H1 (cell line): ENCODE measurements at regions of chr15 and their contacts with region 1.

Region 1: DNA sequence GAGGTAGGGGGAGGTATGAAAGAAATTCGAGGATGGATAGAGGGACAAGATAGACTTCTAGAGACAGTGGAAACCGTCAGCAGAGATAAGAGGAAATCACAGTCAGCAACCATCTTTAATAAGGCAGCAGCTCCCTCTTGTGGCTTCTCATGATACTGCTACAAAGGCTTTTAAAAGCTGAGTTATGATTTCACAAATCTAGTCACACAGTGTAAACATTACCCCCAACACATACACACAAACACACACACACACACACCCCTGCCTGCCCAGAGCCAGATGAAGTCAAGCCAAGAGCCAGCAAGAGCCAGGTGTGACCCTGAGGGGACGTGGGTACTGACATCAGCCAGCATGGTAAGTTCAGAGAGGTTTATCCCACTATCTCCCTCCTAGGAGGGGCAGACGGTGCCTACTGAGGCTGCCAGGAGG is 18.9 kb upstream of the TGM5 start:
- DNase-seq: peak in 1 of 2 experiments; percentile 70
- H3K4me3 ChIP-seq: no peak overlapping the region
- H3K27ac ChIP-seq: no peak overlapping the region
- H3K4me1 ChIP-seq: no peaks in the 10 kb centered on the region
- H3K27me3 ChIP-seq: no peaks in the 10 kb centered on the region
- CTCF ChIP-seq: peak in 2 of 3 experiments; percentile 80 to 83; a peak in 3 of 4 replicates
- EP300 ChIP-seq: no peak
- POLR2A ChIP-seq: no peak
- RAD21 ChIP-seq: peak; percentile 93 to 95

Region 2: DNA sequence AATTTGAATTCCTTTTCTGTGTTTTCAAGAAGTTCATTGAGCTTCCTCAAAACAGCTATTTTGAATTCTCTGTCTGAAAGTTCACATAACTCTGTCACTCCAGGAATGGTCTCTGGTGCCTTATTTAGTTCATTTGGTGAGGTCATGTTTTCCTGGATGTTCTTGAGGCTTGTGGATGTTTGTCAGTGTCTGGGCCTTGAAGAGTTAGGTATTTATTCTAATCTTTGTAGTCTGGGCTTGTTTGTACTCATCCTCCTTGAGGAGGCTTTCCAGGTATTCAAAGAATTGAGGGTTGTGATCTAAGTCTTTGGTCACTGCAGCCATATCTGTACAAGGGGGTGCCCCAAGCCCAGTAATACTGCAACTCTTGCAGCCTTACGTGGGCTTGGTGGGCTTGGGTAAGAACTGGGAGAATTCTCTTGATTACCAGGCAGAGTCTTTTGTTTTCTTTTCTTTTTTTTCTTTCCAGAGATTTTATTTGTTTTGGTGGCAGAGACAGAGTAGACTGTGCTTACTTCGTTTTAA is 119.8 kb before region 1 on chr15:
- CTCF ChIA-PET with region 1: no interaction called
- POLR2A ChIA-PET with region 1: no interaction called
- DNase-seq: no peak
- H3K4me3 ChIP-seq: no peak overlapping the region
- H3K27ac ChIP-seq: no peak overlapping the region
- H3K4me1 ChIP-seq: peaks cover 0 to 5% (median 0%) of the 10 kb centered on the region in 4 experiments; a peak in 1 of 7 replicates
- H3K27me3 ChIP-seq: no peaks in the 10 kb centered on the region
- CTCF ChIP-seq: no peak
- EP300 ChIP-seq: no peak
- POLR2A ChIP-seq: no peak
- RAD21 ChIP-seq: no peak

Region 3: GRCh38 chr15:43185157-43186017 is 100.2 kb before region 1 on chr15 and contains the start of gene CCNDBP1:
- CTCF ChIA-PET with region 1: interaction called, 18 read pairs
- POLR2A ChIA-PET with region 1: no interaction called
- DNase-seq: peak; percentile 87 to 95
- H3K4me3 ChIP-seq: peak within 1 kb of the TSS; percentile 64 to 93 (median 89)
- H3K27ac ChIP-seq: 0 out of 2 replicates have a peak within 1 kb of the TSS, but pooled peaks have one; percentile 54
- H3K4me1 ChIP-seq: peaks cover 4 to 8% (median 5%) of the 10 kb centered on the region in 4 experiments; a peak in 5 of 7 replicates
- H3K27me3 ChIP-seq: no peaks in the 10 kb centered on the region
- CTCF ChIP-seq: peak; percentile 28 to 59 (median 56); a peak in 3 of 4 replicates
- EP300 ChIP-seq: no peak
- POLR2A ChIP-seq: peak in 1 of 2 experiments; percentile 56; a peak in 1 of 3 replicates
- RAD21 ChIP-seq: peak; percentile 15 to 16; a peak in 1 of 4 replicates
- total RNA-seq, gene CCNDBP1: 23.4 TPM in 2 replicates

Region 4: GRCh38 chr15:43204016-43204901 is 81.4 kb before region 1 on chr15:
- CTCF ChIA-PET with region 1: interaction called, 90 read pairs
- POLR2A ChIA-PET with region 1: no interaction called
- DNase-seq: peak; percentile 44 to 67
- H3K4me3 ChIP-seq: no peak overlapping the region
- H3K27ac ChIP-seq: no peak overlapping the region
- H3K4me1 ChIP-seq: peaks cover 0 to 3% (median 0%) of the 10 kb centered on the region in 4 experiments; a peak in 1 of 7 replicates
- H3K27me3 ChIP-seq: no peaks in the 10 kb centered on the region
- CTCF ChIP-seq: peak; percentile 75 to 84 (median 77)
- EP300 ChIP-seq: no peak
- POLR2A ChIP-seq: no peak
- RAD21 ChIP-seq: peak; percentile 40 to 62; a peak in 3 of 4 replicates

Region 5: DNA sequence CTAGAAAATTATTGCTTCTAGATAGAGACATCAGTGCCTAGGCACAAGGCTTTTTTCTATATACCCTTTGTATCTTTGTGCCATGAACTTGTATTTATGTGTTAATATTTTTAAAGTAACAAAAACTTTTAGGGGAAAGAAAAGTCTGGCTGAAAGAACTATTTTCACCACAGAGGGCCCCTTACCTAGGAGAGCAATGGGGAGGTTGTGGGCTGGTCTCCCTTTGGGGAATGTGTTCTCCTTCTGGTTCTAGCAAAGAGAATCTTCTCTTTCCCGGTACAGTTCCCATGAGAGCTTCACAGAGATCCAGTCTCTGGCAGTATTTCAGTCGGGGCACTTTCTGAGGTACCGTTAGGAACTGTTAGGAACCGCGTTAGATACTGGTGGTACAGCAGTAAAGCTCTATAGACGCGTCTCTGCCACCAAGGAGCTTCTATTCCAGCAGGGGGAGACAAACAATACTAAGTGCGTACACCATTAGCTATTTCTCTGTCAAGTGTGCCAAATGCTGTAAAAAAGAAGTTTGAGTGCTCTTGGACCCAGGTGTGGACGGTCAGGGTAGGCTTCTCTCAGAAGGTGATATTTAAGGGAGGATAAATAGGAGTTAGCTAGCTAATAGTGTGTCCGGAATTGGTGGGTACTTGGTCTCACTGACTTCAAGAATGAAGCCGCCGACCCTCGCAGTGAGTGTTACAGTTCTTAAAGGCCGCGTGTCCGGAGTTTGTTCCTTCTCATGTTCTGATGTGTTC is 60.2 kb before region 1 on chr15:
- CTCF ChIA-PET with region 1: interaction called, 178 read pairs
- POLR2A ChIA-PET with region 1: no interaction called
- DNase-seq: no peak
- H3K4me3 ChIP-seq: no peak overlapping the region
- H3K27ac ChIP-seq: no peak overlapping the region
- H3K4me1 ChIP-seq: no peaks in the 10 kb centered on the region
- H3K27me3 ChIP-seq: no peaks in the 10 kb centered on the region
- CTCF ChIP-seq: peak in 2 of 3 experiments; percentile 79 to 88; a peak in 3 of 4 replicates
- EP300 ChIP-seq: no peak
- POLR2A ChIP-seq: no peak
- RAD21 ChIP-seq: peak; percentile 76 to 79

Region 6: DNA sequence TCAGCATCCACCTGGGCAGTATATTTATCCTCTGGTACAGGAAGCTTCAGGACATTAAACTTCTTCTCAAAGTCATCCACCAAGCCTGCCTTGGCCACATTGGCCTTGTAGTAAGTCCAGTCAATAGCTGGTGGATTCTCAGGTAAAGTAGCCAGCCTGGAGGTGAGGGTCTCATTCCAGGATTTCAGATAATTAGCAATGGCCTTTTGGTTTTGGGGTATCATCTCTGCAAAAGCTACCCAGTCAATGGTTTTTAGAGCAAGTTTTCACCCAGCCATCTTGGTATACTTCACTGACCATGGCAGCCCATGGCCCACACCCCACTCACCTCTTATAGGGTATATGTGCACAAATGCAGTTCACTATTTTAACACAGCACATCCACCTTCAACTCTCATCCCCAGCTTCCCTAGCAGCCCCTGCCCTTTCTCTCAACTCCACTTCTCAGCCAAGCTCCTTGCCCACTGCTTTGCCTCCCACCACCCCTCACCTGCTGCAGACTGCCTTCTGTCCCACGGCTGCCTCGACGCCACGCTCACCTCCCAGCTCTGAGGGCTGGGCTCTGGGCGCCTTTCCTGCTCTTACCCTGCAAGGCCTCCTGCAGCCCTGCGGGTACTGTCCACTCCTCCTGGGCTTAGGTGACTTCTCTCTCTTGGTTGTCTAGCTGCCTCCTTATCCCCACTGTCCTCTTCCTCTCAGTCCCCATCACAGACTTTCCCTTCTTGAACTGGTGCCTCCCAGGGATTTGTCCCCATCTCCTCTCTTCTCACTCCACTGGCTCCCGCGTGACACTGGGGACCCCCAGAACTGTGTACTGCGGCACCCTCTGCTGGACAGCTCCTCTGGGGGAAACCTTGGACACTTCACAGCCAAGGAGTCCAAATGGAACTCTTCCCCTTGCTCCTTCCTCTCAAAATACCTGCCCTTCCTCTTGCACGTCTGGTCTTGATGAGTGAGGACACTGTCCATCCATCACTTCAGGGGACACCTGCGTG is 17.2 kb before region 1 on chr15:
- CTCF ChIA-PET with region 1: interaction called, 34 read pairs
- POLR2A ChIA-PET with region 1: no interaction called
- DNase-seq: peak in 1 of 2 experiments; percentile 69
- H3K4me3 ChIP-seq: no peak overlapping the region
- H3K27ac ChIP-seq: no peak overlapping the region
- H3K4me1 ChIP-seq: no peaks in the 10 kb centered on the region
- H3K27me3 ChIP-seq: no peaks in the 10 kb centered on the region
- CTCF ChIP-seq: peak; percentile 63 to 72 (median 70)
- EP300 ChIP-seq: no peak
- POLR2A ChIP-seq: no peak
- RAD21 ChIP-seq: peak; percentile 78 to 82

Region 7: DNA sequence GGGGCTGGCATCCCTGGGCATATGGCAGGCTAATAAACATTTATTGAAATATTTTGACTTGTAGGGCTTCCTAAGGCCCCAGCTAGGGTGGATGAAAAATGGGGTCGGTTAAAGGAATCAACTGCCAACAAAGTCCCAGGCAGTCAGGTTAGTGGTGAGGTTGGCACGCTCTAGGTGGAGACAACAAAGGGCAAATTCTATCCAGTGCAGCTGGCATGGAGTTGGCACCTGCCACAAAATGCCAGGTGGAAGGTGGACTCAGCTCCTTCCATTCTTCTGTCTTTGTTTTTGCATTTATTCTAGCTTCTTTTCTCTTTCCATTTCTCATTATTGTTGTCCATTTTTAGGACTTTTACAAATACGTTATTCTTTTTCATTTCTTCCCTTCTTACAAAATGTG is 13.8 kb after region 1 on chr15:
- CTCF ChIA-PET with region 1: interaction called, 32 read pairs
- POLR2A ChIA-PET with region 1: no interaction called
- DNase-seq: no peak
- H3K4me3 ChIP-seq: no peak overlapping the region
- H3K27ac ChIP-seq: no peak overlapping the region
- H3K4me1 ChIP-seq: peaks cover 0 to 4% (median 0%) of the 10 kb centered on the region in 4 experiments; a peak in 1 of 7 replicates
- H3K27me3 ChIP-seq: no peaks in the 10 kb centered on the region; a peak in 2 of 7 replicates
- CTCF ChIP-seq: no peak
- EP300 ChIP-seq: no peak
- POLR2A ChIP-seq: no peak
- RAD21 ChIP-seq: no peak

Region 8: GRCh38 chr15:43352693-43353382 is 67.2 kb after region 1 on chr15:
- CTCF ChIA-PET with region 1: interaction called, 10 read pairs
- POLR2A ChIA-PET with region 1: no interaction called
- DNase-seq: no peak
- H3K4me3 ChIP-seq: no peak overlapping the region
- H3K27ac ChIP-seq: no peak overlapping the region
- H3K4me1 ChIP-seq: no peaks in the 10 kb centered on the region
- H3K27me3 ChIP-seq: no peaks in the 10 kb centered on the region
- CTCF ChIP-seq: no peak
- EP300 ChIP-seq: no peak
- POLR2A ChIP-seq: no peak
- RAD21 ChIP-seq: no peak